ENCODE measurements at regions of chr14 and their contacts with region 1.

Region 1: GRCh38 chr14:23154964-23155587 is 28.4 kb downstream of the SLC7A8 start:
- H3K4me3 Mint-ChIP-seq: peak overlapping the region; percentile 63
- H3K27ac Mint-ChIP-seq: peak overlapping the region; percentile 91
- H3K4me1 Mint-ChIP-seq: peaks cover 78% of the 10 kb centered on the region
- H3K27me3 Mint-ChIP-seq: no peaks in the 10 kb centered on the region

Region 2: GRCh38 chr14:23052182-23052623 is 102.9 kb before region 1 on chr14:
- intact Hi-C with region 1: no loop called
- H3K4me3 Mint-ChIP-seq: no peak overlapping the region
- H3K27ac Mint-ChIP-seq: no peak overlapping the region
- H3K4me1 Mint-ChIP-seq: peaks cover 24% of the 10 kb centered on the region
- H3K27me3 Mint-ChIP-seq: peaks cover 27% of the 10 kb centered on the region

Region 3: DNA sequence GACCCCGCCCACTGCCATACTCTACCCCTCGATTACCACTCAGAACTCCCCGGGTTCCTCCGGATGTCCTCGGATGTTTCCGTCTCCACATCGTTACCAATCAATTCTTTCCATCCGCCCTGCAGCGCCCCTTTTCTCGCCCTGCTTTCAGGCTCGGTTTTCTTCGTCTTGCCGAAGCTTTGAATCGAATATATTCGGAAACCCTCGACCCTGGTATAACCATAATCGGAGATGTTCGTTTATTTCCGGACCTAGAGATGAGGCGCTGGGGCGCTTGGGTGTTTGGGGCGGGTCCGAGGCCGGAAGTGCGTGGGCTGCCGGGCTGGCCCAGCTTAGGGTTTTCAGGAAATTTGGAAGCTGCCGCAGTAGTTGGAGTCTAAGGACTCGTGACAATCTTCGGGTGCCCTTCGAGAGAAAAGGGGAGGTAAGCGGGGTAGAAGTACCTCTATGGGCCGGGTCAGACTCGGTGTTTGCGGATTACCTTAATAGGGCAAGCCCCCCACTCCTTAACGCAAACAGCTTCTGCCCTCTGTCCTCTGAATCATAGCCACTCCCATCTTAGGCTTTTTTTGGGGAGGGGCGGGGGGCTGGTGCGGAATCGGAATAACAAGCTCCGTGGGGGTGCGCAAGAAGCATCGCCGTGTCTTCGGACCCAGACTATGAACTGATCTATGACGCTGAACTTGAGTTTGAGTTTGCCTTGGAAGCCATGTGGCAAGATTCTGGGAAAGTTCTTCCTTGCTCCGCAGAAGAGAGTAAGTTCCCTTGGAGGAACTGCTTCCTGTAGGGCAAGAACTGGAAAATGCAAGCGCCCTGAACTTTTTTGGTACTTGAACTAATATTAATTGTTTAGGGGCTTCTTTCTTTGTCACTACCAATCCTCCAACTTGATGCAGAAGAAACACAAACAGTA is 59.6 kb before region 1 on chr14 and contains the start of gene C14orf119:
- intact Hi-C with region 1: no loop called
- H3K4me3 Mint-ChIP-seq: no peak within 1 kb of the TSS
- H3K27ac Mint-ChIP-seq: no peak within 1 kb of the TSS
- H3K4me1 Mint-ChIP-seq: peaks cover 53% of the 10 kb centered on the region
- H3K27me3 Mint-ChIP-seq: no peaks in the 10 kb centered on the region

Region 4: DNA sequence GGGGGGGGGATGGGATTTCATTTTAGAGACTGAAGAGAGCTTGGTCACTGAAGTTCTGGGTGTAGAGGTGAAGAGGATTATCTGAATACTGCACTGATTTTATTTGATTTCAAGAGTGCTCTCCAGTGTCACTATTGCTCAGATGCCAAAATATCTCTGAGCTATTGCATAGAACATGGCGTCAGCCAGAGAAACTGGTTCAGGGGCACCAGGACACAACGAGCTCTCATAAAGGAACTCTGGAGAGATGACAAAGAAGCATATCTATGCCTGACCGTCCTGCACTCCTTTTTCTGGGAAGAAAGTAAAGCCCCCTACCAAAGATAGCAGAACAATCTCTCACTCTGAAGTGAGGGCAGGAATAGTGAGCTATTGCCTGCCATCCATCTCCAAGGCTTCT is 26.4 kb after region 1 on chr14:
- intact Hi-C with region 1: loop called (anchors 2 kb)
- H3K4me3 Mint-ChIP-seq: no peak overlapping the region
- H3K27ac Mint-ChIP-seq: no peak overlapping the region
- H3K4me1 Mint-ChIP-seq: peaks cover 52% of the 10 kb centered on the region
- H3K27me3 Mint-ChIP-seq: no peaks in the 10 kb centered on the region

Region 5: GRCh38 chr14:23195550-23196101 is 40.5 kb after region 1 on chr14:
- intact Hi-C with region 1: no loop called
- H3K4me3 Mint-ChIP-seq: no peak overlapping the region
- H3K27ac Mint-ChIP-seq: no peak overlapping the region
- H3K4me1 Mint-ChIP-seq: no peaks in the 10 kb centered on the region
- H3K27me3 Mint-ChIP-seq: no peaks in the 10 kb centered on the region

Measured in dendritic cell treated with granulocyte-macrophage colony-stimulating factor and Interleukin-4, amounts not matched to agents 40 ng/mL and 50 ng/mL, for 4 days (primary cell).